OCI-LY7 (cell line): ENCODE measurements at regions of chr16 and their contacts with region 1.

Region 1: DNA sequence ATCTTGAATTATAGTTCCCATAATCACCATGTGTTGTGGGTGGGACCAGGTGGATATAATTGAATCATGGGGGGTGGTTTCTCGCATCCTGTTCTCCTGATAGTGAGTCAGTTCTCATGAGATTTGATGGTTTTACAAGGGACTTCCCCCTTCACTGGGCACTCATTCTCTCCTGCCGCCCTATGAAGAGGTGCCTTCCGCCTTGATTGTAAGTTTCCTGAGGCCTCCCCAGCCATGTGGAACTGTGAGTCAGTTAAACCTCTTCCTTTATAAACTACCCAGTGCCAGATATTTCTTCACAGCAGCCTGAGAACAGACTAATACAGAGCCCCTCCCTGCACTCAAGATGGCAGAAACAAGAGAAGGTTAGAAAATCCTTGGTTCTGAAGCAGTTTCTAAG is 26.4 kb downstream of the LDAF1 start:
- DNase-seq: no peak
- H3K4me3 ChIP-seq: no peak overlapping the region
- H3K27ac ChIP-seq: no peak overlapping the region
- H3K4me1 ChIP-seq: no peaks in the 10 kb centered on the region
- CTCF ChIP-seq: no peak

Region 2: DNA sequence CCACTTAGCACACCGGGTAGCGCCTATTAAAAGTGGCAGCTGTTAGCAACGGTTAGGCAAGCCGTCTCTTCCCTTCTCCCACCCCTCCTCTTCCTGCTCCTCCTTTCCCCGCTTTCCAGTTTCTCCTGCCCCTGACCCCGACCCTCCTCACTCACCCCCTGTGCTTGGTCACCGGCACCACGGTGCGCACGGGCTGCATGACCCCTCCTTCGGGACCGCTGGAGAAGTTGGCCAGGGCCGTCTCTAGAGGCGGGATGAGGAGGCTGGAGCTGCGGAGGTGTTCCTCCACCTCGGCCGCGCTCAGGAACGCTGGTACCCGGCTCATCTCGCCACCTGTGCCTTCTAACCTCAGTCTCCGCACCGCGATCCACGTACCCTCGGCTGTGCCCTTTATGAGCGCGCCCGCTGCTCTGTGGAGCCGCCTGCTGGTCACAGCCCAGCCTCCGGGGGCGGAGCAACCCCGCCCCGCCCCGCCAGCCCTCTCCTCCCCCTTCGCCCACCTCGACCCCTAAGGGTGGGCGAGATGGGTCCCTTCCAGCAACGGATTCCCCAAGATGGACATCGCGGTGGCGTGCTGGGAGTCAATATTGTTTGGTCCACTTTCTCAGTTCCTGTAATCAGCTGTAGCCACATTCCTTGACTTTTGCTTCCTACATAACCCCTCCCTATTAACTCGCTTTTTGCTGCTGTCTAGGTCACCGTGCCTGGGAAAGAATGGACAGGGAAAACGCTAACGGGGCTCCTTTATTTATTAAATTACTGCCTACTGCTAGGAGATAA is 93.3 kb after region 1 on chr16 and contains the start of gene CRYM:
- CTCF ChIA-PET with region 1: no interaction called
- POLR2A ChIA-PET with region 1: interaction called, 4 read pairs
- intact Hi-C with region 1: loop called (anchors 5 kb)
- DNase-seq: peak; percentile 76
- H3K4me3 ChIP-seq: peak within 1 kb of the TSS; percentile 54
- H3K27ac ChIP-seq: no peak within 1 kb of the TSS
- H3K4me1 ChIP-seq: peaks cover 23% of the 10 kb centered on the region
- CTCF ChIP-seq: peak; percentile 89
- total RNA-seq, gene CRYM: 0.18 and 0.28 TPM in 2 replicates

Region 3: GRCh38 chr16:21300309-21301167 is 115.7 kb after region 1 on chr16:
- CTCF ChIA-PET with region 1: interaction called, 5 read pairs
- POLR2A ChIA-PET with region 1: no interaction called
- intact Hi-C with region 1: loop called (anchors 2 kb)
- DNase-seq: peak; percentile 87
- H3K4me3 ChIP-seq: peak overlapping the region; percentile 81
- H3K27ac ChIP-seq: peak overlapping the region; percentile 69
- H3K4me1 ChIP-seq: peaks cover 25% of the 10 kb centered on the region
- CTCF ChIP-seq: peak; percentile 91

Region 4: GRCh38 chr16:21338537-21339268 is 153.9 kb after region 1 on chr16:
- CTCF ChIA-PET with region 1: no interaction called
- POLR2A ChIA-PET with region 1: no interaction called
- intact Hi-C with region 1: no loop called
- DNase-seq: no peak
- H3K4me3 ChIP-seq: no peak overlapping the region
- H3K27ac ChIP-seq: no peak overlapping the region
- H3K4me1 ChIP-seq: no peaks in the 10 kb centered on the region
- CTCF ChIP-seq: no peak